ENCODE measurements at regions of chrX and their contacts with region 1.

Region 1: DNA sequence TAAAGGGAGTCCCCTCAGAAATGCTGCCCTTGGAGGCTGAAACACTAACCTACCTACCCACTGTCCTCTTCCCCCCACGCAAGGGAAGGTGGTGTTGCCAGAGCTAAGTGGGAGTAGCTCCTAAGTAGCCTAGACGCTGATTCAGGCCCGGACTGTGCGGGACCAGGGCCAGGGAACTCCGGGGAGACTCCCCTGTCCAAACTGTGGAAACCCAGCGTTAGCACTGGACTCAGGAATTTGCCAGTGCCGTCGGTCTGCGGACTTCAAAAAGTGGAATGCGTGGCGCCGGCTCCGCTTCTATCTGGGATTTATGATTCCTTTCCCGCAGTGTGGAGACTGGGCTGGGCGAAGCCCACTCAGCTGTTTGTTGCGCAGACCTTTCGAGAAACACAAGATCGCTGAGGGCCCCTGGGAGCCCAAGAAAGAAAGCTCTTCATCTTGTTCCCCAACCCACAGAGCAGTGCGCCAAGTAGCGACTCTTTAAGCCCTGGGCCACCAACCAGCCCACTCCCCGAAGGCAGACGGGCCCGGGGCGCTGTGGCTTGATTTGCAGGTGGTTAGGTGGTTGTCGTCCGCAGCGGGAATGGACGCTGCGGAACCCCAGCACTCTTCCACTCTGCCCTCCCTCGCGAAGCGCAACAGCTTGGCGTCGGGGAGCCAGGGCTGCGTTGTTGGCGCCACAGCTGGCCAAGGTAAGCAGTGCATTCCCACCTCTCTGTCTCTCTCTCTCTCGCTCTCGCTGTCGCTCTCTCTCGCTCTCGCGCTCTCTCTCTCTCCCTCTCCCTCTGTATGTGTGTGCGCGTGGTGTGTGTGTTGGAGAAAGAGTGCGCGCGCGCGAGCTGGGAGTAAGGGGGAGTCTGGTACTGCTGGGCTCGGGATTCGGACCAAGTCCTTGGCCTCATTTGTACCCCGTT is 2.0 kb downstream of the TMEM255A start:
- DNase-seq: peak; percentile 37 to 89 (median 66)
- ATAC-seq: peak; percentile 94
- H3K4me3 ChIP-seq: peak overlapping the region; percentile 59 to 61
- H3K4me3 Mint-ChIP-seq: peak overlapping the region; percentile 79
- H3K27ac ChIP-seq: peak overlapping the region in 1 of 2 experiments; percentile 36
- H3K27ac Mint-ChIP-seq: peak overlapping the region; percentile 84
- H3K4me1 ChIP-seq: peaks cover 5% of the 10 kb centered on the region
- H3K4me1 Mint-ChIP-seq: peaks cover 10% of the 10 kb centered on the region
- H3K27me3 ChIP-seq: no peaks in the 10 kb centered on the region
- H3K27me3 Mint-ChIP-seq: peaks cover 20% of the 10 kb centered on the region
- CTCF ChIP-seq: peak; percentile 42

Region 2: GRCh38 chrX:120250522-120251271 is 58.5 kb before region 1 on chrX and contains the start of gene ZBTB33:
- CTCF ChIA-PET with region 1: interaction called, 3 read pairs
- POLR2A ChIA-PET with region 1: interaction called, 9 read pairs
- intact Hi-C with region 1: loop called (anchors 1 to 2 kb)
- DNase-seq: peak; percentile 68 to 94 (median 79)
- ATAC-seq: peak; percentile 99
- H3K4me3 ChIP-seq: peak within 1 kb of the TSS; percentile 58 to 68
- H3K4me3 Mint-ChIP-seq: peak within 1 kb of the TSS; percentile 92
- H3K27ac ChIP-seq: peak within 1 kb of the TSS; percentile 82 to 91
- H3K27ac Mint-ChIP-seq: peak within 1 kb of the TSS; percentile 98
- H3K4me1 ChIP-seq: no peaks in the 10 kb centered on the region
- H3K4me1 Mint-ChIP-seq: peaks cover 37% of the 10 kb centered on the region
- H3K27me3 ChIP-seq: no peaks in the 10 kb centered on the region
- H3K27me3 Mint-ChIP-seq: peaks cover 2% of the 10 kb centered on the region
- CTCF ChIP-seq: peak; percentile 52
- total RNA-seq, gene ZBTB33: 26.4 to 30.7 TPM

Region 3: DNA sequence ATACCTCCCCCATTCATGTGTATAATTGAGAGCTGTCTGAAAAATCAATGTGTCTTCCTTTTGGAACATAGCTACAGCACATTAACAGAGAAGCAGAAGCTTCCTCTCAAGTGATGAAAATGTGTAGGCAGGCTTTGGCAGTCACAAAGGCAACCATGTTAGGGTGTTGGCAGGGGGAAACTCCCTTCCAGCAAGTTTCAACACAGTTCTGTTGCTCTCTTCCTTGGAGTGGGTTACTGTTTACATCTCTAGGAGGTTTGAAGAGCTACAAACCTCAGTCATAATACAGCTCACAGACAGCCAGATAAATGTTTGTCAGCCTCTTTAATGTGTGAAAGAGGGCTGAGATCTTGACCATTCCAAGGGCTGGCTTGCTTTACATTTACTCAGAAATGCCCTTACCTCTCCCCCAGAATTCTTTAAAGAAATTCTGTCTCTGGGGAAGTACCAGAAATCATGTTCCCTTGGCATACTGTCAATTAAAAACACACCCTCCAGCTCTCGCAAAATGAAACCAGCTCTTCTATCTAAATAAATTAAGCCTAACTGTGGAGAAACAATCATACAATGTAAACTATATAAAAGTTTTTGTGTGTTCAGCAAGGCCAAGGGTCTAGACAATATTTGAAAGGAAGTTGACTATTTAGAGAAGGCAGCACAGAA is 39.7 kb before region 1 on chrX:
- CTCF ChIA-PET with region 1: no interaction called
- POLR2A ChIA-PET with region 1: no interaction called
- intact Hi-C with region 1: no loop called
- DNase-seq: peak in 2 of 9 experiments; percentile 41 to 65
- ATAC-seq: peak; percentile 81
- H3K4me3 ChIP-seq: no peak overlapping the region
- H3K4me3 Mint-ChIP-seq: no peak overlapping the region
- H3K27ac ChIP-seq: peak overlapping the region in 1 of 2 experiments; percentile 31
- H3K27ac Mint-ChIP-seq: peak overlapping the region; percentile 43
- H3K4me1 ChIP-seq: peaks cover 12% of the 10 kb centered on the region
- H3K4me1 Mint-ChIP-seq: peaks cover 7% of the 10 kb centered on the region
- H3K27me3 ChIP-seq: no peaks in the 10 kb centered on the region
- H3K27me3 Mint-ChIP-seq: no peaks in the 10 kb centered on the region
- CTCF ChIP-seq: no peak